Vagina (tissue), 2 donors: ENCODE measurements at regions of chr6 and their contacts with region 1.

Region 1: GRCh38 chr6:15512126-15512525 is 150.7 kb downstream of the DTNBP1 start:
- DNase-seq: no peak
- H3K4me3 ChIP-seq: no peak overlapping the region
- H3K27ac ChIP-seq: no peak overlapping the region
- H3K4me1 ChIP-seq: no peaks in the 10 kb centered on the region
- H3K27me3 ChIP-seq: no peaks in the 10 kb centered on the region
- CTCF ChIP-seq: no peak
- POLR2A ChIP-seq: no peak

Region 2: DNA sequence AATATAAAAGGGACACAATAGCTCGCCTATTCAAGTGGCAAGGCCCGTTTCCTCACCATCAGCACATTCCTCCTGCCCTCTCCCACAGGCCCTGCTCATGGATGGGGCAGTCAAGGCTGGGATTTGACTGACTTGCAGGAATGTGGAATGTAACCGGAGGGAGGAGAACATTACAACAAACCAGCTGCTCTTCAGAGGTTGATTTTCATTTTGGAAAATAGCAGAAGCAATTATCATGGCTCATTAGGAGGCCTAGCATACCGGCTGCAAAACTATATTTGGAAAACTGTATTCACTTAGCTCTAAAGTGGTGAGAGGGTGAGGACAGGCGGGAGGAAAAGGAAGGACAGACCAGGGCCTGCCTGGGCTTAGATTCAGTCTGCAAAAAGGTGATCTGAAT is 1110.9 kb before region 1 on chr6:
- intact Hi-C with region 1: loop called (anchors 2 kb)
- DNase-seq: no peak
- H3K4me3 ChIP-seq: no peak overlapping the region
- H3K27ac ChIP-seq: no peak overlapping the region
- H3K4me1 ChIP-seq: no peaks in the 10 kb centered on the region
- H3K27me3 ChIP-seq: no peaks in the 10 kb centered on the region
- CTCF ChIP-seq: no peak
- POLR2A ChIP-seq: no peak

Region 3: GRCh38 chr6:15017261-15017660 is 494.9 kb before region 1 on chr6:
- intact Hi-C with region 1: no loop called
- DNase-seq: no peak
- H3K4me3 ChIP-seq: peak overlapping the region in 1 of 2 donors; percentile 5
- H3K27ac ChIP-seq: no peak overlapping the region
- H3K4me1 ChIP-seq: no peaks in the 10 kb centered on the region
- H3K27me3 ChIP-seq: no peaks in the 10 kb centered on the region
- CTCF ChIP-seq: no peak
- POLR2A ChIP-seq: no peak

Region 4: GRCh38 chr6:15955944-15956735 is 444.0 kb after region 1 on chr6:
- intact Hi-C with region 1: no loop called
- DNase-seq: no peak
- H3K4me3 ChIP-seq: no peak overlapping the region
- H3K27ac ChIP-seq: no peak overlapping the region
- H3K4me1 ChIP-seq: peaks cover 33% of the 10 kb centered on the region
- H3K27me3 ChIP-seq: no peaks in the 10 kb centered on the region
- CTCF ChIP-seq: no peak
- POLR2A ChIP-seq: no peak